ENCODE measurements at regions of chr2 and their contacts with region 1.

Region 1: DNA sequence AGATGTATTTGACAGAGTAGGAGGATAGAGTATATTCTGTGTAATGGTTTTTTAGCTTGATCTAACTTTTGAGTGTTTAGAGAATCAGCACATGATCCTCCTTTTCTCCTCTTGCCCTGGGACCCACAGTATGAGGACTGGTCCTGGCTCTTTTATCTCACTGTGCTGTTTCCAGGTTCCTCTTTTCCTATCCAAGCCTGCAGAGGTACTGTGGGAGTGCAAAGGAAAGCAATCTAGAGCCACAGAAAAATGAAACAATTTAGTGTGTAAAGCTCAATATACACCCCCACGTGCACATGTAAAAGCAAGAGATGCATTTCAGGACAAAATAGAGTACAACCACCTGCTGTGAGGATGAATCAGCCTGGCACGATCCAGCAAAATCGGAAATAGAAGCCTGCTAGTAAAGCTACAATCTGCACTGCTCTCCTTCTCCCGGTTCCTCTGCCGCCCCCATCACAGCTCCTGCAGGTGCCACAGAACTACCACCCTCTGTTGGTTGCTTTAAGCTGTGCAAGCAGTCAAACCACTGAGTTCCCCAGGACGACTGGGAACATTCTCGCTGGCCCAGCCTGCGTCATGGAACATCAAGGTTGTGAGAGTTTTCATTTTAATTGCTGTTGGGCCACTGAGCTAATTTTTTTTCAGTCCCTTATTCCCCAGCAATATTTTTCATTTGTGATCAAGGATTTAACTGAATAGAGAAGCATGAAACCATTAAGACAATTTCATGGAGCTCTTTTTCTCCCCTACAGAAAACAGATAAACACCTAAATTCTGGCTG is 47.8 kb upstream of the MAPRE3 start:
- DNase-seq: peak; percentile 25 to 42
- ATAC-seq: peak in 7 of 8 donors; percentile 73 to 93 (median 87)
- H3K4me3 ChIP-seq: no peak overlapping the region
- H3K27ac ChIP-seq: no peak overlapping the region
- H3K4me1 ChIP-seq: peaks cover 0 to 5% (median 0%) of the 10 kb centered on the region in 9 donors
- H3K27me3 ChIP-seq: peaks cover 0 to 29% (median 2%) of the 10 kb centered on the region in 7 donors
- CTCF ChIP-seq: peak; percentile 28 to 71 (median 63)

Region 2: DNA sequence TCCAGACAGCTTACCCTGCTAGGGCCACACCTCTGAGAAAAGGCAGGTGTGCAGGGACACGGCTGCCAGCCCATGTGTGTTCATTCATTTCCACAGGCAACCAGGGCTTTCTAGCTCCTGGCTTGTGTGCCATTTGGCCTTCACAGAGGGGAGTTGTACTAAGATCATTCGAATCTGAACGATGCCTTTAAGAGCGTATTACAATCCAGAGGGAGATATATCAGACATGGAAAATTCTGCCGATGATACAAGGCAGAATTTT is 380.5 kb before region 1 on chr2:
- intact Hi-C with region 1: no loop called
- DNase-seq: no peak
- ATAC-seq: no peak
- H3K4me3 ChIP-seq: no peak overlapping the region
- H3K27ac ChIP-seq: no peak overlapping the region
- H3K4me1 ChIP-seq: no peaks in the 10 kb centered on the region
- H3K27me3 ChIP-seq: peaks cover 0 to 36% (median 10%) of the 10 kb centered on the region in 7 donors
- CTCF ChIP-seq: no peak

Region 3: GRCh38 chr2:26852405-26853306 is 69.9 kb before region 1 on chr2:
- intact Hi-C with region 1: loop called (anchors 2 to 5 kb)
- DNase-seq: peak in 1 of 2 donors; percentile 37
- ATAC-seq: peak; percentile 66 to 90 (median 78)
- H3K4me3 ChIP-seq: no peak overlapping the region
- H3K27ac ChIP-seq: no peak overlapping the region
- H3K4me1 ChIP-seq: peaks cover 11 to 39% (median 35%) of the 10 kb centered on the region in 9 donors
- H3K27me3 ChIP-seq: peaks cover 25 to 78% (median 60%) of the 10 kb centered on the region in 7 donors
- CTCF ChIP-seq: no peak

Region 4: GRCh38 chr2:26859622-26860021 is 63.0 kb before region 1 on chr2:
- intact Hi-C with region 1: loop called in 2 of 10 experiments (anchors 2 to 5 kb)
- DNase-seq: no peak
- ATAC-seq: no peak
- H3K4me3 ChIP-seq: no peak overlapping the region
- H3K27ac ChIP-seq: no peak overlapping the region
- H3K4me1 ChIP-seq: peaks cover 0 to 15% (median 0%) of the 10 kb centered on the region in 9 donors
- H3K27me3 ChIP-seq: peaks cover 0 to 46% (median 10%) of the 10 kb centered on the region in 7 donors
- CTCF ChIP-seq: no peak

Region 5: DNA sequence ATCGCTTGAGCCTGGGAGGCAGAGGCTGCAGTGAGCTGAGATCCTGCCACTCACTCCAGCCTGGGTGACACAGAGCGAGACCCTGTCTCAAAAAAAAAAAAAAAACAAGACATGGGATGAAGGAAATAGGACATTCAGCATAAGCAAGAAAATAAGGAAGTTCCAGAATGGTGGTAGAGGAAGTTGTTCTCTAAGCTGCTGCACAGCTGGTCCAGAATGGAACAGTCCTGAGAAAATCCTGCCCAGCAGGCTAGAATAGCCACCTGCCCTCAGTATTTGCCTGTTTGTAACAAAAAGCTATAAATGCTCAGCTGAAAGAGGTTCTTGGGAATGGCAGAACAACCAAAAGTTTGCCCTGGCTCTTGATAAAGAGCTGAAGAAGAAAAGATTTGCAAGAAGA is 36.7 kb after region 1 on chr2:
- intact Hi-C with region 1: no loop called
- DNase-seq: no peak
- ATAC-seq: peak in 1 of 8 donors; percentile 36
- H3K4me3 ChIP-seq: no peak overlapping the region
- H3K27ac ChIP-seq: no peak overlapping the region
- H3K4me1 ChIP-seq: peaks cover 0 to 16% (median 0%) of the 10 kb centered on the region in 9 donors
- H3K27me3 ChIP-seq: peaks cover 0 to 69% (median 43%) of the 10 kb centered on the region in 7 donors
- CTCF ChIP-seq: no peak